ENCODE measurements at regions of chr15 and their contacts with region 1.

Region 1: DNA sequence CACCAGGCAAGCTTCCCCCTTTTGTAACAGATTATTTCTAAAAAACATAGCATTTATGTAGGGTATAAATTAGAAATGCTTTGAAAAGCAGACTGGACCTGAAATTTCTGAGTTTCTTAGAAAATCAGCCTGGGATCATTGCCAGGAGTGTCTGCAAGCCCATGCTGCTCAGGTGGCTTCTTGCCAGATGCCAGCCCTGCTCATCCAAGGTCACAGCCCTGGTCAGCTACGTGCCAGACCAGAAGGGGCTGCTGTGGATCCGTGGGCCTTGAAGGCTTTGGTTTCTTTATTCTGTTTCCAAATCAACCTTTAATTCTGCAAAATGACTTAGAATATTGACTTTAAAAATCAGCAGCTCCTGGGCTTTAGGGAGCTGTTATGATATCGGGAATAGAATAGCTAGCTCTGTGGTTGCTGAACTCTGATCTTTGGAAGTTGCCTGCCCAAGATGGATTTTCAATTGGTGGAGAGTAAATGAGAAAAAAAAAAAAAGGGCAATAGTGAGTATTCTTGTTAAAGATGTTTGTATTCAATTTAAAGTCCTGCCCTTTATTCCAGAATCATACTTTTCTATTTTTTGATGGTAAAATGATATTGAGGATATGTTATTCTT is 370.1 kb upstream of the ONECUT1 start:
- DNase-seq: no peak
- H3K4me3 ChIP-seq: no peak overlapping the region
- H3K27ac ChIP-seq: no peak overlapping the region
- H3K4me1 ChIP-seq: no peaks in the 10 kb centered on the region
- H3K27me3 ChIP-seq: no peaks in the 10 kb centered on the region
- CTCF ChIP-seq: no peak

Region 2: DNA sequence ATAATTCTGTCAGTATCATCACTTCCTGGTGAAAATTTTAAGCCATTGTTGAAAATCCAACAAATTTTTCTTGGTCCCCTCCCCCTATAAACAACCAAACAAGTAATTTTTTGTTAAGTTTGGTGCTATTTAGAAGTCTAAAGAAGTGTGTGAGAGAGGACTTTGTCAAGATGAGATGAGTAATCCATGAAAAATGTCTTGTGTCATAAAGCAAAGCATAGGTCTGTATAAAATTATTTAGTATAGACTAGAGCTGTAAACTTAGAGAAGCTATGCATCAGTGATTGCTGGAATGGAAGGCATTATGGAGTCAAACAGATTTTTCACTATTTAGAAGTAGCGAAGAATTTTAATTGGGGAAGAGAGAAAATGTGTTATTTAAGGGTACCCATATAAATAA is 1109.8 kb before region 1 on chr15:
- CTCF ChIA-PET with region 1: no interaction called
- POLR2A ChIA-PET with region 1: interaction called, 15 read pairs
- intact Hi-C with region 1: no loop called
- DNase-seq: peak; percentile 36
- H3K4me3 ChIP-seq: no peak overlapping the region
- H3K27ac ChIP-seq: no peak overlapping the region
- H3K4me1 ChIP-seq: peaks cover 1% of the 10 kb centered on the region
- H3K27me3 ChIP-seq: no peaks in the 10 kb centered on the region
- CTCF ChIP-seq: no peak

Region 3: GRCh38 chr15:53297828-53298227 is 137.6 kb after region 1 on chr15:
- CTCF ChIA-PET with region 1: no interaction called
- POLR2A ChIA-PET with region 1: no interaction called
- intact Hi-C with region 1: no loop called
- DNase-seq: no peak
- H3K4me3 ChIP-seq: no peak overlapping the region
- H3K27ac ChIP-seq: no peak overlapping the region
- H3K4me1 ChIP-seq: no peaks in the 10 kb centered on the region
- H3K27me3 ChIP-seq: no peaks in the 10 kb centered on the region
- CTCF ChIP-seq: no peak

Region 4: GRCh38 chr15:53312707-53313106 is 152.5 kb after region 1 on chr15:
- CTCF ChIA-PET with region 1: no interaction called
- POLR2A ChIA-PET with region 1: no interaction called
- intact Hi-C with region 1: no loop called
- DNase-seq: no peak
- H3K4me3 ChIP-seq: no peak overlapping the region
- H3K27ac ChIP-seq: no peak overlapping the region
- H3K4me1 ChIP-seq: no peaks in the 10 kb centered on the region
- H3K27me3 ChIP-seq: no peaks in the 10 kb centered on the region
- CTCF ChIP-seq: no peak

Measured in A673 (cell line).